CD8-positive, alpha-beta memory T cell (primary cell): ENCODE measurements at regions of chr17 and their contacts with region 1.

Region 1: GRCh38 chr17:64420143-64420971 is 28.6 kb upstream of the MILR1 start:
- DNase-seq: peak in 4 of 5 donors; percentile 3 to 71 (median 64)
- H3K4me3 ChIP-seq: no peak overlapping the region
- H3K4me3 Mint-ChIP-seq: no peak overlapping the region
- H3K27ac ChIP-seq: no peak overlapping the region
- H3K27ac Mint-ChIP-seq: no peak overlapping the region
- H3K4me1 ChIP-seq: no peaks in the 10 kb centered on the region
- H3K4me1 Mint-ChIP-seq: peaks cover 3 to 7% (median 5%) of the 10 kb centered on the region in 3 donors
- H3K27me3 ChIP-seq: no peaks in the 10 kb centered on the region
- H3K27me3 Mint-ChIP-seq: no peaks in the 10 kb centered on the region

Region 2: GRCh38 chr17:64306850-64307463 is 113.4 kb before region 1 on chr17:
- CTCF ChIA-PET with region 1: interaction called, 33 read pairs
- POLR2A ChIA-PET with region 1: no interaction called
- DNase-seq: peak; percentile 51 to 76 (median 58)
- H3K4me3 ChIP-seq: no peak overlapping the region
- H3K4me3 Mint-ChIP-seq: no peak overlapping the region
- H3K27ac ChIP-seq: no peak overlapping the region
- H3K27ac Mint-ChIP-seq: no peak overlapping the region
- H3K4me1 ChIP-seq: no peaks in the 10 kb centered on the region
- H3K4me1 Mint-ChIP-seq: peaks cover 0 to 3% (median 0%) of the 10 kb centered on the region in 3 donors
- H3K27me3 ChIP-seq: no peaks in the 10 kb centered on the region
- H3K27me3 Mint-ChIP-seq: peaks cover 0 to 3% of the 10 kb centered on the region in 2 donors

Region 3: DNA sequence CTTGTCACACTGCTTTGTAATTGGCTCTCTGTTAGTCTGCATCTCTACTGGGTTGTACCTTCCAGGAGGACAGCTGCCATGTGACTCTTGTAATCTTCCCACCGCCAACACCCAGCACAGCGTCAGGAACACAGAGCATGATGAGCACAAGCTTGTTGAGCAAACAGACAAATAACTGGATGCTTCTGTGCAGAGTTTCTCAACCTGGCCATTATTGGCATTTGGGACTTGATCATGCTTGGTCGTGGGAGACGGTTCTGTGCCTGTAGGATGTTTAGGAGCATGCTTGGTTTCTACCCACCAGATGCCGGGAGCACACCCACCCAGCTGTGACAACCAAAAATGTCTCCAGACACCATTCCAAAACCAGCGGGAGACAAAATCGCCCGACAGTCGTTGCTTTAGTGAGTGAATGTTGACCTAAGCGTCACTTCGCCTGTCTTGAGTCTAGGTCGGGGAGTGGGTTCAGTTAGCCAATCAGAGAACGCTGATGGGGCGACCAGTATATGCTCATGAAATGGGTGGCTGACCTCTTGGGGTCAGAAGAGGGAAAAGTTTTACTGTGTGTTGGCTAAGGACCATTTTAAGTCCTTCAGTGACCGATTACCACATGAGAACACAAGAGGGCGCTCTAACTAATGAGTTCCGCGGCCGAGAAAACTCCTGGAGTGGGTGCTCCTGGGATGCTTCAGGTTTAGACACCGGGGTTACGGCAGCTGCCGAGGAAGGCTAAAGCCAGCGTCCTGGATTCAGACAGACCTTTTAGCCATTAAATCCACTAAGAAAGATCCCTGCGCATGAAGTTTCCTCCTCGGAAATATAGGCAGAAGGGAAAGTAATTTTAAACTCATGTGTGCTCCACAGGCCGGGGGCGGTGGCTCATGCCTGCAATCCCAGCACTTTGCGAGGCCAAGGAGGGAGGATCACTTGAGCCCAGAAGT is 99.5 kb before region 1 on chr17:
- CTCF ChIA-PET with region 1: interaction called, 76 read pairs
- POLR2A ChIA-PET with region 1: no interaction called
- DNase-seq: peak; percentile 32 to 66 (median 44)
- H3K4me3 ChIP-seq: no peak overlapping the region
- H3K4me3 Mint-ChIP-seq: peak overlapping the region in 3 of 7 donors; percentile 39 to 52 (median 44)
- H3K27ac ChIP-seq: no peak overlapping the region
- H3K27ac Mint-ChIP-seq: peak overlapping the region in 6 of 8 donors; percentile 50 to 85 (median 72)
- H3K4me1 ChIP-seq: peaks cover 10% of the 10 kb centered on the region
- H3K4me1 Mint-ChIP-seq: peaks cover 18 to 33% (median 22%) of the 10 kb centered on the region in 3 donors
- H3K27me3 ChIP-seq: no peaks in the 10 kb centered on the region
- H3K27me3 Mint-ChIP-seq: peaks cover 0 to 5% of the 10 kb centered on the region in 2 donors

Region 4: DNA sequence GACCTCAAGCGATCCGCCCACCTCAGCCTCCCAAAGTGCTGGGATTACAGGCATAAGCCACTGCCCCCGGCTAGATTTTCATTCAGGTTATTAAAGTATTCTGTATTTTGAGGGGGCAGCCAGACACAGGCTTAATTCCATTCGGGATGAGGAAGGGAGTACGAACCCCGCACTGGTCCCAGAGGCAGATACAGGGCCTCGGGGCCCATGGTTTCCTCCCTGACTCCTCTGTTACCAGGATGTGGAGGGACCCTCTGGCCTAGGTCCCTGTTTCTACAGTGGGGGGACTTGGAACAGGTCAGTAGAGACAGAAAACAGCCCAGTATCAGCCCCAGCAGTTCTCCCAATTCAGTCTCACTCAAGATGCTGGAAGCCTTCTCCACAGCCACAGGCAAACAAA is 71.7 kb before region 1 on chr17:
- CTCF ChIA-PET with region 1: interaction called, 17 read pairs
- POLR2A ChIA-PET with region 1: no interaction called
- DNase-seq: no peak
- H3K4me3 ChIP-seq: no peak overlapping the region
- H3K4me3 Mint-ChIP-seq: no peak overlapping the region
- H3K27ac ChIP-seq: no peak overlapping the region
- H3K27ac Mint-ChIP-seq: peak overlapping the region in 7 of 8 donors; percentile 29 to 97 (median 95)
- H3K4me1 ChIP-seq: peaks cover 22% of the 10 kb centered on the region
- H3K4me1 Mint-ChIP-seq: peaks cover 6 to 25% (median 19%) of the 10 kb centered on the region in 3 donors
- H3K27me3 ChIP-seq: no peaks in the 10 kb centered on the region
- H3K27me3 Mint-ChIP-seq: no peaks in the 10 kb centered on the region

Region 5: GRCh38 chr17:64378890-64379354 is 41.4 kb before region 1 on chr17:
- CTCF ChIA-PET with region 1: interaction called, 22 read pairs
- POLR2A ChIA-PET with region 1: no interaction called
- DNase-seq: no peak
- H3K4me3 ChIP-seq: no peak overlapping the region
- H3K4me3 Mint-ChIP-seq: no peak overlapping the region
- H3K27ac ChIP-seq: no peak overlapping the region
- H3K27ac Mint-ChIP-seq: peak overlapping the region in 4 of 8 donors; percentile 48 to 79 (median 68)
- H3K4me1 ChIP-seq: no peaks in the 10 kb centered on the region
- H3K4me1 Mint-ChIP-seq: peaks cover 13 to 46% (median 29%) of the 10 kb centered on the region in 3 donors
- H3K27me3 ChIP-seq: no peaks in the 10 kb centered on the region
- H3K27me3 Mint-ChIP-seq: no peaks in the 10 kb centered on the region

Region 6: GRCh38 chr17:64441772-64442540 is 21.6 kb after region 1 on chr17:
- CTCF ChIA-PET with region 1: no interaction called
- POLR2A ChIA-PET with region 1: no interaction called
- DNase-seq: peak in 2 of 5 donors; percentile 7 to 35
- H3K4me3 ChIP-seq: peak overlapping the region; percentile 4
- H3K4me3 Mint-ChIP-seq: peak overlapping the region in 6 of 7 donors; percentile 65 to 82 (median 68)
- H3K27ac ChIP-seq: no peak overlapping the region
- H3K27ac Mint-ChIP-seq: peak overlapping the region in 7 of 8 donors; percentile 42 to 92 (median 76)
- H3K4me1 ChIP-seq: peaks cover 22% of the 10 kb centered on the region
- H3K4me1 Mint-ChIP-seq: peaks cover 12 to 18% (median 14%) of the 10 kb centered on the region in 3 donors
- H3K27me3 ChIP-seq: no peaks in the 10 kb centered on the region
- H3K27me3 Mint-ChIP-seq: peaks cover 3% of the 10 kb centered on the region in 2 donors

Region 7: DNA sequence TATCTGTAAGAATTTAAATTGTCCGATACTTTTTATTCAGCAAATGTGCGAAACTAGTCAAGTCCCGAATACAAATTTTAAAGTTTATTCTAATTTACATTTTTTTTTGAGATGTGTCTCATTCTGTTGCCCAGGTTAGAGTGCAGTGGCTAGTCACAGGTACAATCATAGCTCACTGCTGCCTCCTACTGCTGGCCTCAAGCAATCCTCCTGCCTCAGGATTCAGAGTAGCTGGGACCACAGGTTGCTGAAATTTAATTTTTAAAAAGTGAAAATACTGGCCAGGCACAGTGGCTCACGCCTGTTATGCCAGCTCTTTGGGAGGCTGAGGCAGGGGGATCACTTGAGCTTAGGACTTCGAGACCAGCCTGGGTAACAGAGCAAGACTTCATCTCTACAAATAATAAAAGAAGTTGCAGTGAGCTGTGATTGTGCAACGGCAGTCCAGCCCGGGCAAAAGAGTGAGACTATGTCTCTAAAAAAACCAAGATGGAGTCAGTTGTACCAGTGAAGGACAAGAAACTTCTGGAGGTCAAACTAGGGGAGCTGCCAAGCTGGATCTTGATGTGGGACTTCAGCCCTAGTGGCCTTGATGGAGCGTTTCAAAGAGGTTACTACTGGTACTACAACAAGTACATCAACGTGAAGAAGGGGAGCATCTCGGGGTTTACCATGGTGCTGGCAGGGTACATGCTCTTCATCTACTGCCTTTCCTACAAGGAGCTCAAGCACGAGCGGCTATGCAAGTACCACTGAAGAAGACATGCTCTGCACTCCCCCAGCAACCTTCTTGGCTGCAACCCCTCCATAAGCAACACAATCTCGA is 70.9 kb after region 1 on chr17:
- CTCF ChIA-PET with region 1: interaction called, 32 read pairs
- POLR2A ChIA-PET with region 1: interaction called, 9 read pairs
- DNase-seq: peak; percentile 9 to 55 (median 33)
- H3K4me3 ChIP-seq: no peak overlapping the region
- H3K4me3 Mint-ChIP-seq: peak overlapping the region in 1 of 7 donors; percentile 46
- H3K27ac ChIP-seq: no peak overlapping the region
- H3K27ac Mint-ChIP-seq: peak overlapping the region in 1 of 8 donors; percentile 92
- H3K4me1 ChIP-seq: peaks cover 29% of the 10 kb centered on the region
- H3K4me1 Mint-ChIP-seq: peaks cover 24 to 39% (median 34%) of the 10 kb centered on the region in 3 donors
- H3K27me3 ChIP-seq: no peaks in the 10 kb centered on the region
- H3K27me3 Mint-ChIP-seq: no peaks in the 10 kb centered on the region

Region 8: GRCh38 chr17:64648234-64648633 is 227.9 kb after region 1 on chr17:
- CTCF ChIA-PET with region 1: interaction called, 28 read pairs
- POLR2A ChIA-PET with region 1: no interaction called
- DNase-seq: no peak
- H3K4me3 ChIP-seq: no peak overlapping the region
- H3K4me3 Mint-ChIP-seq: no peak overlapping the region
- H3K27ac ChIP-seq: no peak overlapping the region
- H3K27ac Mint-ChIP-seq: peak overlapping the region in 3 of 8 donors; percentile 15 to 47 (median 29)
- H3K4me1 ChIP-seq: peaks cover 10% of the 10 kb centered on the region
- H3K4me1 Mint-ChIP-seq: peaks cover 35 to 66% (median 57%) of the 10 kb centered on the region in 3 donors
- H3K27me3 ChIP-seq: no peaks in the 10 kb centered on the region
- H3K27me3 Mint-ChIP-seq: no peaks in the 10 kb centered on the region